ENCODE measurements at regions of chr9 and their contacts with region 1.

Region 1: GRCh38 chr9:86303316-86303975 is 21.1 kb upstream of the ISCA1 start:
- DNase-seq: peak; percentile 82
- H3K4me3 ChIP-seq: no peak overlapping the region
- H3K27ac ChIP-seq: peak overlapping the region; percentile 29
- H3K4me1 ChIP-seq: peaks cover 9% of the 10 kb centered on the region
- H3K27me3 ChIP-seq: no peaks in the 10 kb centered on the region
- CTCF ChIP-seq: no peak

Region 2: DNA sequence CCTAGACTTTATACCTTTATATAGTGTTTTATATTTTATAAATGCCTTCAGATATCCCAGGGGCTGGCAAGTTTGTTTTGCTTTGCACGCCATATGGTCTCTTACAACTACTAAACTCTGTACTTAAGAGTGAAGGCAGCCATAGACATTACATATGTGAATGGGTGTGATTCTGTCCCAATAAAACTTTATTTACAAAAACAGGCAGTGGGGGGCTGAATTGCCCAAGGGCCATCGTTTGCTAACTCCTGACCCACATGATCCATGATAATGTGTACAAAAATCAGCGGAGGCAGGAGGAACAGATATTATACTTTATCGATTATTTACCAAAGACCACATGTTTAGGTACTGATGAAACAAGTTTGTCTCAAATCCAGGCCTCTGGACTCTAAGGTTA is 14.7 kb after region 1 on chr9:
- CTCF ChIA-PET with region 1: no interaction called
- dilution Hi-C with region 1: no loop called
- in situ Hi-C with region 1: no loop called
- intact Hi-C with region 1: loop called (anchors 2 kb)
- DNase-seq: no peak
- H3K4me3 ChIP-seq: no peak overlapping the region
- H3K27ac ChIP-seq: no peak overlapping the region
- H3K4me1 ChIP-seq: no peaks in the 10 kb centered on the region
- H3K27me3 ChIP-seq: no peaks in the 10 kb centered on the region
- CTCF ChIP-seq: no peak

Region 3: DNA sequence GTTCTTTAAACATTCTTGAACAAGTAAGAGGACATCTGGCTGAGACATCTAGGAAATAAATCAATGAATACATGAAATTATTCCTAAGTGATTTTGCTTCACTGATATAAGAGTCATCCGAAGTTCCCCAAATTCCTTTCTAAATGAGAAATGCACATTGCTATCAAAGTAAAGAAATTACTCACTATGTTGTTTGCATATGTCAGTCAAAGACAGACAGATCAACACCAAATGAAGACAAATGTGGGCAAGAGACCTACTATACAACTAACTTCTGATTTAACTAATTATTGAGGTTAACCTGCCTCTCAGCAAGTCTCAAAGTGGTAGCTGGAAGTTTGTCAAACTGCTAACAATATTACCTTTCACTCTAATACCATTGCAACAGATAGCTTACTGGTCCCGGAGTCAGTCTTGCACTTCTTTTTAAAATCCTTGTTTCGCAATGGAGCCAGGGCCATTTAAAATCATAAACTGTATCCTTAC is 37.6 kb after region 1 on chr9:
- CTCF ChIA-PET with region 1: no interaction called
- dilution Hi-C with region 1: no loop called
- in situ Hi-C with region 1: no loop called
- intact Hi-C with region 1: loop called (anchors 5 kb)
- DNase-seq: no peak
- H3K4me3 ChIP-seq: no peak overlapping the region
- H3K27ac ChIP-seq: no peak overlapping the region
- H3K4me1 ChIP-seq: no peaks in the 10 kb centered on the region
- H3K27me3 ChIP-seq: no peaks in the 10 kb centered on the region
- CTCF ChIP-seq: no peak

Measured in mammary epithelial cell (primary cell).